H1 (cell line): ENCODE measurements at regions of chr5 and their contacts with region 1.

Region 1: DNA sequence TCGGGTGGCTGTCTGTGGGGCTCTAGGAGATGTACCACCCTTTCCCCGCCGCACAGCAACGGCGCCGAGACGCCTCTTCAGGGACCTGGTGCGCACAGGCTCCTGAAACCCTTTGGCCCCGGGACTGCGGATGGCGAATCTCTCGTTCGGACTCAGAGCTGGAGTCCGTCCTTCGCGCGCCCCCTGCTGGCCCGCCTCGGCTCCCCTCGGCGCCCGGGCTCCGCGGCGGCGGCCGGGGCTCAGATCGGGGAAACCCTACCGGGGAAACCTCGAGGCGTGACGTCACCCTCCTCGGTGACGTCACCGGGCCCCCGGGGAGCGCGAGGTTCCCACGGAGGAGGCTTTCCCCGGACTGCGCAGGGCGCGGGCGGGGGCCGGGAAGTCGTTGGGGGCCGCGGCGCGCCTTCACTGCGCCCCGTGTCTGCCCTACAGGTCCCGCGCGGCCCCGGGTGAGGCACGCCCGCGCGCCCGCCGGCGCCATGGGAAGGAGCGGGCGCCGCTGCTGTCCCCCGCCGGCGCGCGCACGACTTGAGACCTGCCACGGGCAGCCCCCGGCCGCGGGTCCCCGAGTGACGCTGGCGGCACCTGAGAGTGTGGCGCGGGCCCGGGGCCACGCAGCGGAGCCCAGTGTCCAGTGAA is 7.9 kb downstream of the PRR7 start:
- DNase-seq: peak in 1 of 2 experiments; percentile 98
- H3K4me3 ChIP-seq: peak overlapping the region; percentile 47 to 86 (median 81)
- H3K27ac ChIP-seq: peak overlapping the region; percentile 86; the same call in 1 of the 2 replicates
- H3K4me1 ChIP-seq: peaks cover 0 to 22% (median 10%) of the 10 kb centered on the region in 4 experiments; a peak in 6 of 7 replicates
- H3K27me3 ChIP-seq: peaks cover 0 to 10% (median 8%) of the 10 kb centered on the region in 4 experiments; a peak in 2 of 7 replicates
- CTCF ChIP-seq: peak in 2 of 3 experiments; percentile 82 to 88; a peak in 3 of 4 replicates
- EP300 ChIP-seq: peak in 1 of 2 experiments; percentile 67; a peak in 1 of 3 replicates
- POLR2A ChIP-seq: peak in 1 of 2 experiments; percentile 63; a peak in 1 of 3 replicates
- RAD21 ChIP-seq: peak; percentile 72 to 85

Region 2: DNA sequence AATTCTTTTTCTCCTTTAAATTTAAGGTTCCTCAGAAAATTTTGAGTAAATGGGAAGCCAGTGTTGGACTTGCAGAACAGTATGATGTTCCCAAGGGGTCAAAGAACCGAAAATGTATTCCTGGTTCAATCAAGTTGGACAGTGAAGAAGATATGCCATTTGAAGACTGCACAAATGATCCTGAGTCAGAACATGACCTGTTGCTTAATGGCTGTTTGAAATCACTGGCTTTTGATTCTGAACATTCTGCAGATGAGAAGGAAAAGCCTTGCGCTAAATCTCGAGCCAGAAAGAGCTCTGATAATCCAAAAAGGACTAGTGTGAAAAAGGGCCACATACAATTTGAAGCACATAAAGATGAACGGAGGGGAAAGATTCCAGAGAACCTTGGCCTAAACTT is 244.9 kb before region 1 on chr5:
- CTCF ChIA-PET with region 1: no interaction called
- POLR2A ChIA-PET with region 1: no interaction called
- DNase-seq: no peak
- H3K4me3 ChIP-seq: no peak overlapping the region
- H3K27ac ChIP-seq: no peak overlapping the region
- H3K4me1 ChIP-seq: no peaks in the 10 kb centered on the region
- H3K27me3 ChIP-seq: no peaks in the 10 kb centered on the region
- CTCF ChIP-seq: no peak
- EP300 ChIP-seq: no peak
- POLR2A ChIP-seq: no peak
- RAD21 ChIP-seq: no peak

Region 3: GRCh38 chr5:177317959-177318377 is 136.5 kb before region 1 on chr5:
- CTCF ChIA-PET with region 1: interaction called, 20 read pairs
- POLR2A ChIA-PET with region 1: interaction called, 13 read pairs
- DNase-seq: peak in 1 of 2 experiments; percentile 87
- H3K4me3 ChIP-seq: no peak overlapping the region
- H3K27ac ChIP-seq: no peak overlapping the region
- H3K4me1 ChIP-seq: peaks cover 0 to 4% (median 1%) of the 10 kb centered on the region in 4 experiments; a peak in 4 of 7 replicates
- H3K27me3 ChIP-seq: no peaks in the 10 kb centered on the region
- CTCF ChIP-seq: peak in 2 of 3 experiments; percentile 85 to 89; a peak in 3 of 4 replicates
- EP300 ChIP-seq: no peak
- POLR2A ChIP-seq: no peak
- RAD21 ChIP-seq: peak; percentile 87 to 90

Region 4: GRCh38 chr5:177382423-177383029 is 72.0 kb before region 1 on chr5:
- CTCF ChIA-PET with region 1: interaction called, 430 read pairs
- POLR2A ChIA-PET with region 1: interaction called, 51 read pairs
- DNase-seq: peak in 1 of 2 experiments; percentile 64
- H3K4me3 ChIP-seq: no peak overlapping the region
- H3K27ac ChIP-seq: no peak overlapping the region
- H3K4me1 ChIP-seq: peaks cover 0 to 12% (median 2%) of the 10 kb centered on the region in 4 experiments; a peak in 4 of 7 replicates
- H3K27me3 ChIP-seq: peaks cover 0 to 2% (median under 1%) of the 10 kb centered on the region in 4 experiments; a peak in 3 of 7 replicates
- CTCF ChIP-seq: peak in 2 of 3 experiments; percentile 37 to 59; a peak in 3 of 4 replicates
- EP300 ChIP-seq: no peak
- POLR2A ChIP-seq: no peak
- RAD21 ChIP-seq: peak; percentile 22 to 41; a peak in 2 of 4 replicates

Region 5: GRCh38 chr5:177425801-177426565 is 28.5 kb before region 1 on chr5:
- CTCF ChIA-PET with region 1: interaction called, 10 read pairs
- POLR2A ChIA-PET with region 1: interaction called, 460 read pairs
- DNase-seq: peak; percentile 97 to 100
- H3K4me3 ChIP-seq: peak overlapping the region; percentile 52 to 71 (median 64)
- H3K27ac ChIP-seq: peak overlapping the region; percentile 86; the same call in 1 of the 2 replicates
- H3K4me1 ChIP-seq: peaks cover 4 to 14% (median 9%) of the 10 kb centered on the region in 4 experiments; a peak in 6 of 7 replicates
- H3K27me3 ChIP-seq: no peaks in the 10 kb centered on the region
- CTCF ChIP-seq: no peak
- EP300 ChIP-seq: peak in 1 of 2 experiments; percentile 69; a peak in 1 of 3 replicates
- POLR2A ChIP-seq: peak in 1 of 2 experiments; percentile 95; a peak in 2 of 3 replicates
- RAD21 ChIP-seq: no peak

Region 6: GRCh38 chr5:177473461-177474001 is 19.0 kb after region 1 on chr5 and contains the start of gene DBN1:
- CTCF ChIA-PET with region 1: interaction called, 64 read pairs
- POLR2A ChIA-PET with region 1: interaction called, 3,349 read pairs
- DNase-seq: peak in 1 of 2 experiments; percentile 74
- H3K4me3 ChIP-seq: peak within 1 kb of the TSS; percentile 78 to 96 (median 88)
- H3K27ac ChIP-seq: peak within 1 kb of the TSS; percentile 90
- H3K4me1 ChIP-seq: peaks cover 11 to 46% (median 39%) of the 10 kb centered on the region in 4 experiments
- H3K27me3 ChIP-seq: no peaks in the 10 kb centered on the region
- CTCF ChIP-seq: no peak
- EP300 ChIP-seq: no peak
- POLR2A ChIP-seq: no peak; a peak in 1 of 3 replicates
- RAD21 ChIP-seq: no peak
- total RNA-seq, gene DBN1: 325 and 333 TPM in 2 replicates

Region 7: DNA sequence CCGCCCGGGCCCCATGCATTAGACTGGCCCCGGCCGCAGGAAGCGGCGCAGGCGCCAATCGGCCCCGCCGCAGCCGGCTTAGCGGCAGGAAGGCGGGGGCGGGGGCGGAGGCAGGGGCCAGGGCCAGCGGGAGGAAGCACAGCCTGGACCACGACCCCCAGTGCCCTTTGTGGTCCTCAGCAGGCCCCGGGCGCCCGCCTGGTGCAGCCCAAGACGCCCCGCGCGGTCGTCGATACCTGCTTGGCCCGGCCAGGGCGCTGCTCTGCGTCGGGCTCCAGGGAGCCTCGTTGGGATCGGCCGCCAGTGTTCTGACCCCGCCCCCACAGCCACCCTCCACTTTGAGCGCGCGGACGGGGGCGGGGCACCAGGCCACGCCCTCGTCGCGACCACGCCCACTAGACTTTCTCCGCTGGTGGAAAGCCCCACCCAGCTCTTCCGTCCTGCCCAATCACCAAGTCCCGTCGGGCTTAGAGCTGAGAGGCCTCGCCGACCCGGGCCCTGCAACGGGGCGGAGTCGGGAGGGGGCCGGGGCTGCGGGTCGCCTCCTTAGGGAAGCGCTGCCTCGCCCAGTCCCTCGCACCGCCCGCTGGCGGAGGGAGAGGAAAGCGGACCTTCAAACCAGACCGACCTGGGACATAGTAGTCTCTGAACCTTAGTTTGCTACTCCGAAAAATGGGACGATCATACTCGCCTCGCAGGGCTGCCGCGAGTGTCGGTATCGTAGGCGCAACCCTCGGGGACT is 42.9 kb after region 1 on chr5 and contains the start of gene PDLIM7:
- CTCF ChIA-PET with region 1: interaction called, 32 read pairs
- POLR2A ChIA-PET with region 1: interaction called, 3,349 read pairs
- DNase-seq: peak; percentile 98 to 99
- H3K4me3 ChIP-seq: peak within 1 kb of the TSS; percentile 61 to 83 (median 68)
- H3K27ac ChIP-seq: peak within 1 kb of the TSS; percentile 98
- H3K4me1 ChIP-seq: peaks cover 0 to 31% (median 27%) of the 10 kb centered on the region in 4 experiments; a peak in 6 of 7 replicates
- H3K27me3 ChIP-seq: peaks cover 2 to 12% (median 11%) of the 10 kb centered on the region in 4 experiments; a peak in 6 of 7 replicates
- CTCF ChIP-seq: peak in 1 of 3 experiments; percentile 7; a peak in 1 of 4 replicates
- EP300 ChIP-seq: no peak
- POLR2A ChIP-seq: peak in 1 of 2 experiments; percentile 91; a peak in 1 of 3 replicates
- RAD21 ChIP-seq: no peak
- total RNA-seq, gene PDLIM7: 86.7 and 94.2 TPM in 2 replicates